BJ (cell line): ENCODE measurements at regions of chr7 and their contacts with region 1.

Region 1: DNA sequence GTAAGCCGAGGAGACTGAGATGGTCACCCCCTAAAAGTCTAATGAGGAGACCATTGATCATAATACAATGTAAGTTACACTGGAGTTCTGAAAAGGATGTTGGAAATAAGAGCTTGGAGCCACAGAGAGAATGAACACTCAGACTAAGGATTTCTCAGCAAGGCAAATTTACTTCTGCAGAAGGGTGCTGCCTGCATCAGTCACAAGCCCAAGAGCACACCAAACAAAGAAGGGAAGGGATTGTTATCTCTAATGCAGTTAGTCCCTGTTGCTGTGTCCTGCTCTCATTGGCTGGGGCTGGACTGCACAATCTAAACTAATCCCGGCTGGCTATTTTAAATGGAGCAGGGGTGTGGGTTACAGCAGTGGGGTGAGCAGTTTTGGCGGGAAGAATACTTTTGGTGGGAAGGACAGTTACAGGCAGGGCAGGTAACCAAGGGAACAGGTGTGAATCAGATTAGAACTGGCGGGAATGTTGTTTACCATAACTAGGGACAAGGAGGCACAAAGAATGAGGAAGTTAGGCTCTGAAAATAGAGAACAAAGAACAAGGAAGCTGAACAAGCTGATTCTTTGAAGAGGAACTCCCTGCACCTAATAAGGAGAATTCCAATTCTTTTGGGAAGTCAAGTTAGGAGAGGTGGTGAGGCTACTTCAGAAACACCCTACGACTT is 30.3 kb upstream of the TRIM24 start:
- DNase-seq: no peak
- H3K4me3 ChIP-seq: no peak overlapping the region
- H3K27me3 ChIP-seq: no peaks in the 10 kb centered on the region
- CTCF ChIP-seq: no peak

Region 2: DNA sequence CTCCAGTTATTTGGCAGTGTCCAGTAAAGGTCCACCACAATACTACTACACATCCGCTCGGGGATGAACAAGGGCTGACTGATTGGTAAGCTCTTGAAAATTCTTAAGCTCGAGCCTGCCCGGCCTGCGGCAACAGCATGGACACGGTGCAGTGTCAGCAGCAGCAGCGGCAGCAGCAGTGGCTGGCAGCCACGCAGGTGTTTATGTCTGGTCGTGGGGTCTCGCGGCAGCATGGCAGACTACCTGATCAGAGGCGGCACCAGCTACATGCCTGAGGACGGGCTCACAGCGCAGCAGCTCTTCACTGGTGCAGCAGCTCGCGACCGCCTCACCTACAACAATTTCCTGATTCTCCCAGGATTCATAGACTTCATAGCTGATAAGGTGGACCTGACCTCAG is 10.7 kb after region 1 on chr7:
- CTCF ChIA-PET with region 1: no interaction called
- POLR2A ChIA-PET with region 1: no interaction called
- DNase-seq: no peak
- H3K4me3 ChIP-seq: no peak overlapping the region
- H3K27me3 ChIP-seq: no peaks in the 10 kb centered on the region
- CTCF ChIP-seq: no peak

Region 3: DNA sequence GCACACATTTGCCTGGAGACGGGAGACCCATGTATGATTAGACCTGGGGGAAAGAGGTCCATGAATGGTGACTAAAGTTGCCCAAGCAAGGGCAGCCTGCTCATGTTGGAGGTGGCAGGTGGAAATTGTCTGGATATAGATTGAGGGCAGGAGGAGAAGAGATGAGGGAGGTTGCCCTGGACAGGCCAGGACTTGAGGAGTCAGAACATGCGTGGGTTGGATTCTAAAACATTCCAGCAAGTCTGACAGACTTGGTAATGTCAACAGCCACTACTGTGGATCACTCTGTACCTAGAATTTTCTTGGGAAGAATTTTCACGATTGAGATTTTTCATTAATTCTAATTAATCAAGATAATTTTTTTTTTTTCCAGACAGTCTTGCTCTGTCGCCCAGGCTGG is 290.6 kb after region 1 on chr7:
- CTCF ChIA-PET with region 1: no interaction called
- POLR2A ChIA-PET with region 1: interaction called, 10 read pairs
- DNase-seq: no peak
- H3K4me3 ChIP-seq: no peak overlapping the region
- H3K27me3 ChIP-seq: no peaks in the 10 kb centered on the region
- CTCF ChIP-seq: no peak